Posterior vena cava (tissue), 2 donors: ENCODE measurements at regions of chr11 and their contacts with region 1.

Region 1: GRCh38 chr11:119474682-119475596 is 52.0 kb upstream of the THY1 start:
- DNase-seq: peak; percentile 94

Region 2: GRCh38 chr11:119339589-119340343 is 135.2 kb before region 1 on chr11:
- intact Hi-C with region 1: loop called in 1 of 2 experiments (anchors 10 kb)
- DNase-seq: peak; percentile 93

Region 3: GRCh38 chr11:119356349-119357031 is 118.4 kb before region 1 on chr11:
- intact Hi-C with region 1: loop called in 1 of 2 experiments (anchors 2 kb)
- DNase-seq: peak; percentile 96

Region 4: DNA sequence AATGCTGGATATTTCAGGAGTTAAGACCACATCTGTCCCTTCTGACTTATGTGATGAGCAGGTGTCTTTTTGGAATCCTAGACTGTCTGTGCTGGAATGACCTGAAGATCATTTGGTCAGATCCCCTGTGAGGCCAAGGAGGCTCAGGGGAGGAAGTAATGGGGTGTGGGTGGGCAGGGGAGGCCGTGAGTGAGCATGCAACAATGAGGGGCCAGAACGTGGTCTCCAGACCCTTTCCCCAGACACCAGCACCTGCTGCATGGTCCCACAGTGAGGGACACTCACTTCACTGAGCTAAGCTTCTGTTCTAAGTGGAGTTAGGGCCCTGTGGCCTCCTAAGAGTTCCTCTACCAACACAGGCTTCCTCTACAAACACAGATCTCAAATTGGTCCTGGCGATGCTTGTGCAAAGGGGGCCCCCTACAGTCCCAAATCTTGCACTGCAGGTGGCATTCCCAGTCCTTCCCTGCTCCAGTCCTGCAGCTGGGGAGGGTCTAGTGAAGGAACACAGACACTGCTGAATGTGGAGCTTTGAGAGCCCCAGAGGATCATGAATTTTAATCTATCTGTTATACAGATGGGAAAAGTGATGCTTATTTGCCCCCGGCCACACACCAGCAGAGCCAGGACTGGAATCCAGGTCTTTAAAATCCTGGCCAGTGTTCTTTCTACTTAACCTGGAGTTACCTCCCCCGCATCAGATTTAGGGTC is 100.9 kb before region 1 on chr11:
- intact Hi-C with region 1: loop called (anchors 5 to 10 kb)
- DNase-seq: peak; percentile 92